Right ventricle myocardium superior (tissue), 1 donor: ENCODE measurements at regions of chr3 and their contacts with region 1.

Region 1: DNA sequence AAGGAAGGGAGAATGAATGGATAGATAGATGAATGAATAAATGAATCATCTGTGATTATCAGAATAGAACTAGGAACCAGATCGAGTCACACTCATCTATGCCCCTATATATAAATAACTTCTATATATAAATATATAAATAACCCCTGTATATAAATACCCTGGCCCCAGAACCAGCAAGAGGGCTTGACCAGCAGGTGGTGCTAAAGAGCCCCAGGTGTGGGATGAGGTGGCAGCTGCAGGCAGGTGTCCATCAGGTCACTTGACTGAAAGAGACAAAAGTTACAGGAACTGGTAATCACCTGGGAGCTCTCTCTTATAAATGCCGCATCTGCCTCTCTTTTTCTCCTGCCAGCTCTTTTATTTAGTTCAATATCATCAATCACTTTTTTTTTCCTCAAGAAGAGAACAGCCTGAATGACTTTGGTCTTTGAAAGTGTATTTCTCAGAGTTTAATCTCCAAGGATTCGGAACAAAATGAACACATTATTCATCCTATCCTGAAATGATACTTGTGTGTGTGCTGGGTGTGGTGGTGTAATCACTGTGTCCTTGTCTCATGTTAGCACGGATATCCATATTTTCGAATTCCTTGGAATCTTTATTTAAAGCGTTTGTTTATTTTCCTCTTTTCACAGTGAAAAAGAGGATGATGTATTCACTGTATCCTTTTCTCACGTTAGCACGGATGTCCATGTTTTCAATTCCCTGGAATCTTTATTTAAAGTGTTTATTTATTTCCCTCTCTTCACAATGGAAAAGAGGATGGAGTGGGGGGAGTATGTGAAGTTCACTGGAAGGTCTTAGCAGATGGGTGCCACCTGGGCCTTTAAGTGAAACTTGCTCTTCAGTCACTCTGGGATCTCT is 35.4 kb upstream of the ATG7 start:
- DNase-seq: peak; percentile 56
- ATAC-seq: peak; percentile 69

Region 2: GRCh38 chr3:11335056-11335608 is 98.3 kb after region 1 on chr3:
- intact Hi-C with region 1: loop called (anchors 5 kb)
- DNase-seq: no peak
- ATAC-seq: peak; percentile 79